Right ventricle myocardium superior (tissue), 1 donor: ENCODE measurements at regions of chr3 and their contacts with region 1.

Region 1: GRCh38 chr3:38136777-38137614 is at the start of gene ACAA1:
- DNase-seq: peak; percentile 100
- ATAC-seq: peak; percentile 96
- total RNA-seq, gene ACAA1: 111 TPM

Region 2: GRCh38 chr3:38164966-38165680 is 28.1 kb after region 1 on chr3 and contains the start of gene OXSR1:
- intact Hi-C with region 1: loop called (anchors 2 kb)
- DNase-seq: peak; percentile 100
- ATAC-seq: peak; percentile 95
- total RNA-seq, gene OXSR1: 24.0 TPM